ENCODE measurements at regions of chr5 and their contacts with region 1.

Region 1: GRCh38 chr5:159987031-159987674 is 21.8 kb upstream of the TTC1 start:
- DNase-seq: peak; percentile 85
- ATAC-seq: peak; percentile 87

Region 2: DNA sequence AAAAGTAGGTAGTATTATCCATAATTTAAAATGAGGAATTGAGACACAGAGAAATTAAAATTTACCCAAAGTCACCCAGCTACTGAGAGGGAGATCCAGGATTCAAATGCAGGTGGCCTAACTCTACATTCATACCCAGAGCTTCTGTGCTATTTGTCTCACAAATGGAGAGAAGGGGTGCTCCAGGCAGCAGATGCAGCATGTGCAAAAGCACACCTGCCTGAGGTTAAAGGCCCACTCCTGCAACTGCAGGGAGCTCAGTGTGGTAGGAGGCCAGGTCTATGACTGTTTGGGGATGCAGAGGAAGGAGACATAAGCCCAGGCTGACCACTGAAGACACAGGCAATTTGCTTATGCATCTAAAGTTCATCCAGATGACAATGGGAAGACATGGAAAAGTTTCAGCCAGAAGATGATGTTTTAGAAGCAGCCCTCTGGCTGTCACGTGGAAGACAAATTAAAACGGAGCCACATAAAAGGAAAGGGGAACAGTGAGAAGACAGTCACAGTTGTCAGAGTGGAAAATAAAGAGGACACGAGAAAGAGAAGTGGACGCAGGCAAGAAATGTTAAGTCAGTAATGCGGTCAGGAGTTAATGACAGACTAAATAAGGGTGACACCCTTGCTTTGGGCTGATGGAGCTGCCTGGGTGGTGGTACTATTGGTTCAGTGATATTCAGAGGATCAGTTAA is 1102.2 kb before region 1 on chr5:
- intact Hi-C with region 1: no loop called
- DNase-seq: no peak
- ATAC-seq: no peak

Region 3: GRCh38 chr5:159286420-159287035 is 700.6 kb before region 1 on chr5:
- intact Hi-C with region 1: loop called (anchors 2 kb)
- DNase-seq: no peak
- ATAC-seq: peak; percentile 34

Region 4: GRCh38 chr5:159331093-159331973 is 655.8 kb before region 1 on chr5:
- intact Hi-C with region 1: loop called (anchors 5 kb)
- DNase-seq: peak; percentile 85
- ATAC-seq: peak; percentile 92

Region 5: DNA sequence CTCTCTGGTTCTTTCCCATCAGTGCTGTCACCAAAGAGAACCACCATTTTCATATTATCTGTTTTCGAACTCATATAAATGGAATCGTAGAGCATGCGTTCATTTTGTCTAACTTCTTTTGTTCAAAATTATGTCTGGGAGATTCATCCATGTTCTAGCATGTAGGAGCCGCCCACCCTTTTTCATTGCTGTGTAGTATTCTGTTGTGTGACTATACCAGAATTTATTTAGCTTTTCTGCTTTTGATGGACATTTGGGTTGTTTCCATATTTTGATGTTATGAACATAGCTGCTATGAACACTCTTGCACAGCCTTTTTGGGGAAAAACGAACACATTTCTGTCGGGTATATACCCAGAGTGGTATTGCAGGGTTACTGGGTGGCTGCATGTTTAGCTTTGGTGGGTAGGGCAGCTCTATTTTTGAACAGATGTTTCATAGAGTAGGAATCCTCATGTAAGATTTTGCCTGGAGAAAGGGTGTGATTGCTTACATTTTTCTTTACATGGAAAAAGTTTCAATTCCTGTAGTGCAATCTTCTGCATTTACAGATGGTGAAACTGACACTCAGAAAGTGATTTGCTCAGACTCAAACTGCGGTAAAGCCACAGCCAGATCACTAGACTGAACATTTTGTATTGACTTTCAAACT is 556.7 kb before region 1 on chr5:
- intact Hi-C with region 1: no loop called
- DNase-seq: no peak
- ATAC-seq: no peak

Measured in Right ventricle myocardium inferior (tissue), 1 donor.